ENCODE measurements at regions of chr3 and their contacts with region 1.

Region 1: DNA sequence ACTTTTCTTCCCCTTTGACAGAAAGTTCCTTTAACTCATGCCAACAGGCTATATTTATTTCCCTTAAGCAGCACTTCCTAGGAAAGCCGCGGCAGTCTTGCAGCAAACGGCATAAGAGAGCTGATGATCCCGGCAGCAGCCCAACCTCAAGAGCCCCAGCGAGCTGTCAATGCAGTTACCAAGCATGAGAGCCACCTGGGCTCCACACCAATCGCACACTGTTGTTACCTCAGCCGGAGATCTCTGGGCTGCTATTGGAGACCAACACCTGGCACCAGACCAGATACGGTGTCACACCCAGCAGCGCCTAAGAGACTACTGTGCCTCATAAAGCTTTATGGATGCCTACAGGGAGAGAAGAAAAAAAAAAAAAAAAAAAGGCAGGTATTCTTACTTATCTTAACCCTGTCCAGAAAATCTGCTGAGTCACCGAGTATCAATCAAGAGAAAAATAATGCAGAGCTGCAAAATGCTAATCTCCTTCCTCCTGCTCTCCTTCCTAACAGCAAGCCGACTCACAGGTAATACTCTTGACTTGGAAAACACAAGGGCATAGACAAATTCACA is 11.7 kb downstream of the ABCC5 start:
- DNase-seq: no peak
- H3K4me3 ChIP-seq: no peak overlapping the region
- H3K27ac ChIP-seq: no peak overlapping the region
- H3K4me1 ChIP-seq: no peaks in the 10 kb centered on the region; a peak in 1 of 7 replicates
- H3K27me3 ChIP-seq: no peaks in the 10 kb centered on the region
- CTCF ChIP-seq: no peak
- EP300 ChIP-seq: no peak
- POLR2A ChIP-seq: no peak
- RAD21 ChIP-seq: no peak

Region 2: GRCh38 chr3:183904833-183905780 is 100.9 kb before region 1 on chr3:
- CTCF ChIA-PET with region 1: interaction called, 10 read pairs
- POLR2A ChIA-PET with region 1: no interaction called
- DNase-seq: no peak
- H3K4me3 ChIP-seq: no peak overlapping the region
- H3K27ac ChIP-seq: no peak overlapping the region
- H3K4me1 ChIP-seq: peaks cover 0 to 3% (median under 1%) of the 10 kb centered on the region in 4 experiments; a peak in 3 of 7 replicates
- H3K27me3 ChIP-seq: no peaks in the 10 kb centered on the region
- CTCF ChIP-seq: no peak
- EP300 ChIP-seq: no peak
- POLR2A ChIP-seq: no peak
- RAD21 ChIP-seq: no peak

Region 3: GRCh38 chr3:184016811-184017671 is 11.0 kb after region 1 on chr3:
- CTCF ChIA-PET with region 1: interaction called, 14 read pairs
- POLR2A ChIA-PET with region 1: interaction called, 3 read pairs
- DNase-seq: peak in 1 of 2 experiments; percentile 72
- H3K4me3 ChIP-seq: peak overlapping the region; percentile 81 to 98 (median 96)
- H3K27ac ChIP-seq: peak overlapping the region; percentile 74
- H3K4me1 ChIP-seq: peaks cover 2 to 9% (median 7%) of the 10 kb centered on the region in 4 experiments; a peak in 3 of 7 replicates
- H3K27me3 ChIP-seq: no peaks in the 10 kb centered on the region
- CTCF ChIP-seq: peak; percentile 83 to 93 (median 83)
- EP300 ChIP-seq: no peak
- POLR2A ChIP-seq: no peak
- RAD21 ChIP-seq: peak; percentile 39 to 68